Dorsolateral prefrontal cortex (tissue), 120 donors: ENCODE measurements at regions of chr6 and their contacts with region 1.

Region 1: DNA sequence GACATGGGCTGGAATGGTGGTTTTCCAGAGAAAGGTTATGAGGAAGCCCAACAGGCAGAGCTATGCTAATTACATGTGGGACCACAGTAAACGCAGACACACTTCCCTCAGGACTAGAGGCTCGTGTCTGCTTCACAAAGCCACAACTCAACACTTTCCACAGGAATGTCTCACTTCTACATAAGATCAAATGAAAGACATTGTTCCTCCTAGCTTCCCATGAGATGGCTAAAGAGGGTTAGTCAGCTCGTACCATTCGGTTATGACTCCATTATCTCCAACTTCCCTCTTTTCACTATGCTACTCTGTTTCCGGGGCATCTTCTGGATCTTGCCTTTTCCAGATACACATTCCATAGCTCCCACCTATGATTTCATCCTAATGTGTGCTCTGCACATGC is 29.1 kb upstream of the ZC3H12D start:
- DNase-seq: no peak
- H3K4me3 ChIP-seq: no peak overlapping the region
- H3K27ac ChIP-seq: no peak overlapping the region
- H3K27me3 ChIP-seq: no peaks in the 10 kb centered on the region
- CTCF ChIP-seq: no peak

Region 2: GRCh38 chr6:148720406-148720805 is 793.5 kb before region 1 on chr6:
- intact Hi-C with region 1: no loop called
- DNase-seq: no peak
- H3K4me3 ChIP-seq: no peak overlapping the region
- H3K27ac ChIP-seq: no peak overlapping the region
- H3K27me3 ChIP-seq: peaks cover 0 to 5% (median 0%) of the 10 kb centered on the region in 45 donors
- CTCF ChIP-seq: no peak

Region 3: DNA sequence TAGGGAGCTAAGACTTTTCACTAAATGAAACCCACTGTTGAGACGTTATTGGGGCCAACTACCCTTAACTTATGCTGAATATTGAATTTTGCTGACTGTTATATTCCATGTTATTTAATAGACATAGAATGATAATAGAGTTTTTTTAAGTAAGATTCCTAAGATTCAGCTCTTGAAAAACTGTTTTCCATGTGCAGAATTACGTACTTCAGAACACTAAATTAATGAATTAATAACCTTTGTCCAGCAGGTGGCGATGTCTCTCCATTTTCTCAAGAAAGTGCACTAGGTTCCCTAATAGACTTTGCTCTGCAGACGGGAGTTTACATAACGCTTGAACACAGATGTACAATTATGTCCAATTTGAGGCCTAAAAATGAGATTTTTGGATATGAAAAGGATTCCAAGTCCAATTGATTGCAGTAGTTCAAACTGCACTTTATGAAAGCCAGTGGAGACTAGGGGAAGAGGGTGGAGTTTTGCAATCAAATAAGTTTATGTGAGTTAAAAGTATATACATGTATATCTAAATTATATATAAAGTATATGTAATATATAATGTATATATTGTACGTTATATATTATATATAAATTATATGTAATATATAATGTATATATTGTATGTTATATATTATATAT is 485.0 kb before region 1 on chr6:
- intact Hi-C with region 1: loop called (anchors 5 to 10 kb)
- DNase-seq: peak in 3 of 10 donors; percentile 49 to 65 (median 56)
- H3K4me3 ChIP-seq: peak overlapping the region in 7 of 59 donors; percentile 7 to 23 (median 14)
- H3K27ac ChIP-seq: no peak overlapping the region
- H3K27me3 ChIP-seq: no peaks in the 10 kb centered on the region
- CTCF ChIP-seq: peak; percentile 70 to 99 (median 88)

Region 4: GRCh38 chr6:149082286-149082707 is 431.6 kb before region 1 on chr6:
- intact Hi-C with region 1: loop called in 1 of 2 experiments (anchors 5 kb)
- DNase-seq: peak; percentile 60 to 94 (median 79)
- H3K4me3 ChIP-seq: no peak overlapping the region
- H3K27ac ChIP-seq: peak overlapping the region in 2 of 59 donors; percentile 31 to 56
- H3K27me3 ChIP-seq: no peaks in the 10 kb centered on the region
- CTCF ChIP-seq: peak; percentile 59 to 97 (median 88)

Region 5: DNA sequence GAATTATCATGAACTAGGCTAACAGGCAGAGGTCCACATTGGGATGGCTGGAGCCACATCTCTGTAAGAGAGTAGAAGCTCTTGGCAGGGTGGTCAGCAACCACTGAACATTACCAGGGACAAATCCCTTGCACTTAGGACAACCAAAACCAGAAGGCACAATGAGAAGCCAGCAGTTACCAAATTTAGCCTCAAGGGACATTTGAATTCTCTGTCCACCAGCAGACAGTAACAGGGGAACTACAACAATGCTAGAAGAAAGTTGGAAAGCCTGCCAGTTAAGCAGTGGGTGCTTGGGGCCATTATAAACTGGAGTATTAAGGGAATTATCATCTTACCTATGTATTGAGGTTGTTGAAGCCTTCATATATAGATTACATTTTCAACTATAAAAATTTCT is 212.9 kb before region 1 on chr6:
- intact Hi-C with region 1: no loop called
- DNase-seq: no peak
- H3K4me3 ChIP-seq: no peak overlapping the region
- H3K27ac ChIP-seq: no peak overlapping the region
- H3K27me3 ChIP-seq: no peaks in the 10 kb centered on the region
- CTCF ChIP-seq: no peak

Region 6: DNA sequence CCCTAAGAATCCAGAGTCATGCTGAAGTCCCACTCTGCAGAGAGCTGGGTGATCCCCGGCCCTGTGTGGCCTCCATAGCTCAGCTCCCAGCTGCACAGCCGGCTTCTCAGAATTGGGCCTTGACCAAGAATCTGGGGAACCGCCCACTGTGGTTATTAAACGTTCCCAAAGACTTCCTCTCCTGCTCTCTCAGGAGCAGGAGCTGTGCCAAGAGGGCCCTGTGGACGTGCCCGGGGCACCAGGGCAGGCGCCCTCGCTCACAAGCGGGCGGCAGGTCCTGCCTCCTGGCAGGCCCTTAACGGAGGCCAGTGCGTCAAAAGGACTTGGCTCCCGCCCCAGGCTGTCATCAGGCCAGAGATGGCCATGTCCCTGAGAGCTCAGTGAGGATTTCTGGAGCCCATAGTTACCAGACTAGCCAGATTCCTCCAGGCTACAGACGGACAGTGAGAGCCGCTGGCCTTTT is 59.5 kb before region 1 on chr6:
- intact Hi-C with region 1: loop called in 1 of 2 experiments (anchors 10 kb)
- DNase-seq: peak; percentile 72 to 90 (median 86)
- H3K4me3 ChIP-seq: peak overlapping the region in 37 of 59 donors; percentile 2 to 52 (median 30)
- H3K27ac ChIP-seq: peak overlapping the region in 49 of 59 donors; percentile 5 to 79 (median 49)
- H3K27me3 ChIP-seq: peaks cover 0 to 16% (median 0%) of the 10 kb centered on the region in 45 donors
- CTCF ChIP-seq: peak in 5 of 56 donors; percentile 8 to 29 (median 14)

Region 7: GRCh38 chr6:149545754-149546528 is 32.0 kb after region 1 on chr6 and contains the start of gene PPIL4:
- intact Hi-C with region 1: no loop called
- DNase-seq: peak; percentile 87 to 97 (median 95)
- H3K4me3 ChIP-seq: peak within 1 kb of the TSS; percentile 70 to 100 (median 96)
- H3K27ac ChIP-seq: peak within 1 kb of the TSS; percentile 70 to 99 (median 92)
- H3K27me3 ChIP-seq: no peaks in the 10 kb centered on the region
- CTCF ChIP-seq: peak; percentile 74 to 98 (median 92)
- total RNA-seq, gene PPIL4: 20.6 to 52.2 (median 37.6) TPM